Endothelial cell of umbilical vein (primary cell): ENCODE measurements at regions of chr17 and their contacts with region 1.

Region 1: DNA sequence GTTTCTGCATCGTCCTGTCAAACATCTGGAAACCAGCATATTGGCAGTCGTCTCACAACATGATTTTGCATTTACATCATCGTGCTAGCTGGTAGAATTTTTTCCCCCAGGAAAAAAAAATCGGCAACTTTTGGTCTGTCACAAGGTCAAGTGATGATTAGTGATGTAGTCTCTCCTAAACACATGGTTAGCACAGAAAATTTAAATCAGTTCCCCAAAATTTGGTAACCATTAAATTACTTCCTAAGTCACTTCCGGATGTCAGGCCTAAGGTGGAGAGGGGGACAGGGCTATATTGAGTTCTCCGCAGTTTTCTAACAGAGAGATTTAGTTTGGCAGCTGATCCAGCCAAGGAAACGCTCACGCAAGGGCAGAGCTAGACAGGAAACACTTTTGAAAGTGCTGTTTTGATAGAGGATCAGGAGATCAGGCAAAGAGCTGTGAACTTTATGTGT is 271.0 kb upstream of the TBX2 start:
- DNase-seq: no peak
- H3K4me3 ChIP-seq: no peak overlapping the region
- H3K27ac ChIP-seq: no peak overlapping the region
- H3K4me1 ChIP-seq: no peaks in the 10 kb centered on the region
- H3K27me3 ChIP-seq: peaks cover 0 to 3% of the 10 kb centered on the region in 2 experiments
- CTCF ChIP-seq: no peak
- POLR2A ChIP-seq: no peak

Region 2: GRCh38 chr17:61117998-61118397 is 10.7 kb before region 1 on chr17:
- CTCF ChIA-PET with region 1: no interaction called
- POLR2A ChIA-PET with region 1: no interaction called
- dilution Hi-C with region 1: no loop called
- intact Hi-C with region 1: no loop called
- DNase-seq: no peak
- H3K4me3 ChIP-seq: no peak overlapping the region
- H3K27ac ChIP-seq: no peak overlapping the region
- H3K4me1 ChIP-seq: no peaks in the 10 kb centered on the region
- H3K27me3 ChIP-seq: no peaks in the 10 kb centered on the region
- CTCF ChIP-seq: no peak
- POLR2A ChIP-seq: no peak

Region 3: DNA sequence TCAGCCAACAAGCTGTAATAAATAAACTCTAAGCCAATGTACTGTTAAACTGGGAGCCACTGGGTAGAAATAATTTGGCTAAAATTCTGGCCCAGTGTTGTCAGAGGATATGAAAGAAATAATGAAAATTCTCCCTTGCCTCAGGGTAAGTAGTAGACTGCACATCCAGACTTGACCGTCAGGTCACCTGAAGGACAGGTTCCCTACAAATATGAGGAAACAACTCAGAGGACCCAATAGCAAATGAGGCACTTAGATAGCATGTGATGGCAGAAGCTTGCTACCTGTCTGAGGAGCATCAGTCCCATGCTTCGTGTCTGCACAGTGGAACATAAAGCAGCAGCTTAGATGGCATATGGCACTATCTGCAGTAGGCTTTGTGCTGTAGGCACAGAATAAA is 51.7 kb after region 1 on chr17:
- CTCF ChIA-PET with region 1: no interaction called
- POLR2A ChIA-PET with region 1: no interaction called
- dilution Hi-C with region 1: no loop called
- intact Hi-C with region 1: loop called (anchors 10 kb)
- DNase-seq: no peak
- H3K4me3 ChIP-seq: no peak overlapping the region
- H3K27ac ChIP-seq: no peak overlapping the region
- H3K4me1 ChIP-seq: no peaks in the 10 kb centered on the region
- H3K27me3 ChIP-seq: no peaks in the 10 kb centered on the region
- CTCF ChIP-seq: no peak
- POLR2A ChIP-seq: no peak